ENCODE measurements at regions of chr7 and their contacts with region 1.

Region 1: GRCh38 chr7:103369430-103369829 is 22.0 kb downstream of the PSMC2 start:
- DNase-seq: no peak
- ATAC-seq: no peak
- H3K4me3 ChIP-seq: no peak overlapping the region
- H3K4me1 ChIP-seq: no peaks in the 10 kb centered on the region
- CTCF ChIP-seq: no peak

Region 2: GRCh38 chr7:103307503-103308231 is 61.8 kb before region 1 on chr7:
- intact Hi-C with region 1: loop called in 1 of 2 experiments (anchors 10 kb)
- DNase-seq: no peak
- ATAC-seq: no peak
- H3K4me3 ChIP-seq: no peak overlapping the region
- H3K4me1 ChIP-seq: no peaks in the 10 kb centered on the region
- CTCF ChIP-seq: no peak

Region 3: DNA sequence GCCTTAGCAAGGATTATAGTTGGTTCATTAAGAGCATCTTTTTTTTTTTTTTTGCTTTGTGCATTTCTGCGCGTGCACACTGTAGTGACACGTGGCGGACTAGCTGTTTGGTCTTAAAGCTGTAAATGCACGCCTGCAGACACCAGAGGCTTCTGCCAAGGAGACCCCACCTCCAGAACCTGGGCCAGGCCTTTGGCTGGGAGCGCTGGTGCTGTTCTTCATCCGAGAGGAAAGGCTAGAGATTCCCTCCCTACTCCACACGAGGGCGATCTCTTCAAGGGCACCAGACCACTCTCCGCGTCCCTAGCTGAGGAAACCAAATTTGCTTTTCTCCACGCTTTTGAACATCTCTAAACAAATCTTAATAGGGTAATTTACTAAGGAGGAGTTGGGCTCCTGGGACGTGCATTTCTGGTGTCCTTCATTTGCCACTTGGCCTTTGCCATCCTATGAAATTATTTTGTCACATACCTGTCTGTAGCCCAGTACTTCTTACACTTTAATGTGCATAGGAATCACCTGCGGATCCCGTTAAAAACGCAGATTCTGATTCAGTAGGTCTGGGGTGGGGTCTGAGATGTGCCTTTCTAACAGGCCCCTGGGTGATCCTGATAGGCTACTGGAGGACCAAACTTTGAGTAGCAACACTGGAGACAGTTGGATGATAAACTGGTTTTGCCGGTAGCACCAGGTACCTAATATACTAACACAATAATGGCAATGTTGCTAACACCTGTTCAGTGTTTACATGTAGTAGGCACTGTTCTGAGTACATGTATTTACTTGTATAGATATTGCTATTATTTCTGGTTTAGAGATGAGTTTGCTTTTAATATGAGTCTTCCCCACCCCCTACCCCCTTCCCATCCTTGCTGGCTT is 77.9 kb after region 1 on chr7:
- intact Hi-C with region 1: no loop called
- DNase-seq: peak in 2 of 3 donors; percentile 38 to 62
- ATAC-seq: peak; percentile 77
- H3K4me3 ChIP-seq: no peak overlapping the region
- H3K4me1 ChIP-seq: peaks cover 17% of the 10 kb centered on the region
- CTCF ChIP-seq: peak; percentile 7

Region 4: GRCh38 chr7:103902917-103903316 is 533.5 kb after region 1 on chr7:
- intact Hi-C with region 1: no loop called
- DNase-seq: no peak
- ATAC-seq: no peak
- H3K4me3 ChIP-seq: no peak overlapping the region
- H3K4me1 ChIP-seq: no peaks in the 10 kb centered on the region
- CTCF ChIP-seq: no peak

Measured in mucosa of descending colon (tissue), 3 donors.